H1 (cell line): ENCODE measurements at regions of chr11 and their contacts with region 1.

Region 1: DNA sequence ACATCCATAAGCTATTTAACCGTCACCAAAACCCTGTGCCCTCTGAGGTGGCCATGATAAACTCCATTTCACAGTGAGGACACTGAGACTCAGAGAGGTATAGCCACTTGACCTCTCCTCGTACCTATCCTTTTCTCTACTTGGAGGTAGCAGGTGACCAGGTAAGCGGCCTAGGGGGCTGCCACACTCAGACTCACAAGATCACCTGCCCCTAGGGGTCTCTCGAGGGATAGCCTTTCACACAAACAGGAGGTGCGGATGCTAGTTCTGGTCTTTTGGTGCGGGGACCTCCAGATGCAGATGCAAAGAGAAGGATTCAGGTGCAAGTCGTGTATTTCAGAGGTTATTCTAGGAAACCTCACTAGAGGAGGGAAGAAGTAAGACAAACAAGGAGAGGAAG is 14.6 kb downstream of the MS4A18 start:
- DNase-seq: peak in 1 of 2 experiments; percentile 57
- H3K4me3 ChIP-seq: no peak overlapping the region
- H3K27ac ChIP-seq: no peak overlapping the region
- H3K4me1 ChIP-seq: no peaks in the 10 kb centered on the region
- H3K27me3 ChIP-seq: no peaks in the 10 kb centered on the region
- CTCF ChIP-seq: peak; percentile 47 to 67 (median 51)
- EP300 ChIP-seq: no peak
- POLR2A ChIP-seq: no peak
- RAD21 ChIP-seq: peak; percentile 21 to 38; a peak in 3 of 4 replicates

Region 2: DNA sequence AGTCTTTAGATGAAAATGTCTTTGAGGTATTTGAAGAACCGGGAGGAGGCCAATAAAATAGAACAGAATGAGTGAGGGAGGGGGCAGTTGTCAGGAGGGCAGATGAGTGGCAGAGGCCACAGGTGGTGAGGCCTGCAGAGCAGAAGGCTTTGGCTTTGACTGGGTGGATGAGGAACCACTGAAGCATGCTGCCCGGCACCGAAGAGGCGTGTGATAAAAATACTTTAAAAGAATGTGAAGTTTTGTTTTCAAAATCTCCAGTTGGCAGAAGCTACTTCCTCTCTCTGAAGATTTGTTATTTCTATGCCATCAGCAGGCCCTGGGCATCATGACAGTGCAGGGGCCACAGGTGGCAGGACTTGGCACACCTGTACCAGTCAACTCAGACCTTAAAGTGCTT is 240.3 kb before region 1 on chr11:
- CTCF ChIA-PET with region 1: no interaction called
- POLR2A ChIA-PET with region 1: no interaction called
- DNase-seq: no peak
- H3K4me3 ChIP-seq: no peak overlapping the region
- H3K27ac ChIP-seq: no peak overlapping the region
- H3K4me1 ChIP-seq: peaks cover 0 to 12% (median 6%) of the 10 kb centered on the region in 4 experiments; a peak in 5 of 7 replicates
- H3K27me3 ChIP-seq: no peaks in the 10 kb centered on the region
- CTCF ChIP-seq: no peak
- EP300 ChIP-seq: no peak
- POLR2A ChIP-seq: no peak
- RAD21 ChIP-seq: no peak

Region 3: DNA sequence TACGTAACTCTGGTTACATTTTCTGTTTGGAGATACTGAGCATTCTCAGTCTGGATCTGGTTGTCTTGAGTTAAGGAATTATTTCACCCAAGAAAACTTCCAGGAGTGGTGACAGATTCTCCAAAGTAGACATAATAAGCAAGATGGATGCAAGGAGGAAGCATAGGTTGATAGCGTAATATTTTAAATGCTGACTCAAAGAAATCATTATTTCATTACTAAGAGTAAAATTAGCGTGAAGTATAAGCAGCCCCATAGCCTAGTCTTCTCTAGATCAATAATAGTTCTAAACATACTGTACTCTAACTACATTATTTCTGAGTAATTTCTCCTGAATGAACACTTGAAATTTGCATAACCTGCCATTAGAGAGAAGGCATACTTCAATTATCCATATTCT is 97.2 kb before region 1 on chr11:
- CTCF ChIA-PET with region 1: no interaction called
- POLR2A ChIA-PET with region 1: no interaction called
- DNase-seq: no peak
- H3K4me3 ChIP-seq: no peak overlapping the region
- H3K27ac ChIP-seq: no peak overlapping the region
- H3K4me1 ChIP-seq: no peaks in the 10 kb centered on the region
- H3K27me3 ChIP-seq: no peaks in the 10 kb centered on the region
- CTCF ChIP-seq: no peak
- EP300 ChIP-seq: no peak
- POLR2A ChIP-seq: no peak
- RAD21 ChIP-seq: no peak

Region 4: GRCh38 chr11:60700689-60701480 is 38.2 kb before region 1 on chr11:
- CTCF ChIA-PET with region 1: interaction called, 12 read pairs
- POLR2A ChIA-PET with region 1: no interaction called
- DNase-seq: peak in 1 of 2 experiments; percentile 67
- H3K4me3 ChIP-seq: no peak overlapping the region
- H3K27ac ChIP-seq: no peak overlapping the region
- H3K4me1 ChIP-seq: peaks cover 0 to 2% (median 0%) of the 10 kb centered on the region in 4 experiments; a peak in 3 of 7 replicates
- H3K27me3 ChIP-seq: no peaks in the 10 kb centered on the region
- CTCF ChIP-seq: peak; percentile 35 to 80 (median 70)
- EP300 ChIP-seq: no peak
- POLR2A ChIP-seq: no peak
- RAD21 ChIP-seq: peak; percentile 76 to 77

Region 5: DNA sequence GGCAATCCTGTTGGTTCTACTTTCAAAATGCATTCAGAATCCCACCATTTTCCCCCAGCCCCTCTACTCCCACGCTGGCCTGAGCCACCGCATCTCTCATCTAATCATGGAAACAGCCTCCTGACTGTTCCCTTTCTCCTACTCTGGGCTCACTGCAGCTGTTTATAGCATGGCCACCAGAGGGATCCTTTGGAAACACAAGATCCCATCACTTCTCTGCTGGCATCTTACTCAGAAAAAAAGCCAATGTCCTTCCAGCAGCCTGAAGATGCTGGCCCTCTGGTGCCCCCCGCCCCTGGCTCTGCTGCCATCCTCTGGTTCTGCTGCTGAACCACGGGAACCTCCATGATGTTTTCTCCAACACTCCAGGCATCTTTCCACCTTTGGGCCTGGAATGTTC is 28.6 kb before region 1 on chr11:
- CTCF ChIA-PET with region 1: interaction called, 18 read pairs
- POLR2A ChIA-PET with region 1: no interaction called
- DNase-seq: peak in 1 of 2 experiments; percentile 45
- H3K4me3 ChIP-seq: no peak overlapping the region
- H3K27ac ChIP-seq: no peak overlapping the region
- H3K4me1 ChIP-seq: no peaks in the 10 kb centered on the region
- H3K27me3 ChIP-seq: no peaks in the 10 kb centered on the region
- CTCF ChIP-seq: peak; percentile 7 to 69 (median 52)
- EP300 ChIP-seq: no peak
- POLR2A ChIP-seq: no peak
- RAD21 ChIP-seq: peak; percentile 30 to 39; a peak in 2 of 4 replicates

Region 6: GRCh38 chr11:60750926-60751325 is 11.8 kb after region 1 on chr11:
- CTCF ChIA-PET with region 1: interaction called, 28 read pairs
- POLR2A ChIA-PET with region 1: no interaction called
- DNase-seq: no peak
- H3K4me3 ChIP-seq: no peak overlapping the region
- H3K27ac ChIP-seq: no peak overlapping the region
- H3K4me1 ChIP-seq: no peaks in the 10 kb centered on the region
- H3K27me3 ChIP-seq: no peaks in the 10 kb centered on the region
- CTCF ChIP-seq: no peak
- EP300 ChIP-seq: no peak
- POLR2A ChIP-seq: no peak
- RAD21 ChIP-seq: no peak

Region 7: DNA sequence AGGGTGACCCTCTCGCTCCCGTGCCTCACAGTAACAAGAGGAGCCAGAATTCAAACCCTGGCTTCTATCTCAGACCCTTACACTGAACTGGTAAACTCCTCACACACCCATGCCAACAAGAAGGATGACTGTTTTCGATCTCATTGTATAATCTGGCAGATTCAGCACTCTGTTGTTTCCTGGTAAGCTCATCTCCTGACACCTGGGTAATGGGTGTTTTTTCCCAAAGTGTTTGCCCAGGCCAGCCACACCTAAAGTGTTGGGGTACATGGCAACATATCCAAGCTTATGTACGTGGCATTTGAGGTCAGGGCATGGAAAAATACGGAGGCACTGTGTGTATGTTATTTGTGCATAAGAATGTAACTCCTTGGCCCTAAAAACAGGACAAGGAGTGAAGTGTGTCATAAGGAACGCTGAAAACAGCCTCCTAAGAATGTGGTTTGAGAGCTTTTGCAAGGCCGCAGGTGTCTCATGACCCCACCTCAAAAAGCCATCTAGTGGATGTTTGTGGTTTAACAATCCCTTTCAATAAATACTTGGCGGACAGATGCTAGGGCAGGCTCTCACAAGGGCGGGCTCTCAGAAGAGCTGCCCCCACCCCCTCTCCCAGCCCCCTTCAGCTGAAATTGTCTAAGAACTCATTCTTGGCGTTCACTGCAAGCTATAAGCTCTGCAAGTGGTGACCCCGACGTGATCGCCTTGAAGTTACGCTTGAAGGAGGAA is 17.4 kb after region 1 on chr11 and contains the start of gene MS4A15:
- CTCF ChIA-PET with region 1: interaction called, 61 read pairs
- POLR2A ChIA-PET with region 1: interaction called, 3 read pairs
- DNase-seq: no peak
- H3K4me3 ChIP-seq: no peak within 1 kb of the TSS
- H3K27ac ChIP-seq: no peak within 1 kb of the TSS
- H3K4me1 ChIP-seq: no peaks in the 10 kb centered on the region; a peak in 2 of 7 replicates
- H3K27me3 ChIP-seq: no peaks in the 10 kb centered on the region
- CTCF ChIP-seq: peak; percentile 2 to 63 (median 63)
- EP300 ChIP-seq: no peak
- POLR2A ChIP-seq: no peak
- RAD21 ChIP-seq: peak; percentile 53 to 57
- total RNA-seq, gene MS4A15: 0.17 TPM in 1 of 2 replicates, not detected in the other

Region 8: GRCh38 chr11:60762851-60763691 is 24.0 kb after region 1 on chr11:
- CTCF ChIA-PET with region 1: interaction called, 61 read pairs
- POLR2A ChIA-PET with region 1: interaction called, 3 read pairs
- DNase-seq: no peak
- H3K4me3 ChIP-seq: no peak overlapping the region
- H3K27ac ChIP-seq: no peak overlapping the region
- H3K4me1 ChIP-seq: peaks cover 0 to 1% (median 0%) of the 10 kb centered on the region in 4 experiments; a peak in 1 of 7 replicates
- H3K27me3 ChIP-seq: peaks cover 0 to 6% (median 3%) of the 10 kb centered on the region in 4 experiments; a peak in 3 of 7 replicates
- CTCF ChIP-seq: peak in 2 of 3 experiments; percentile 47 to 58; a peak in 2 of 4 replicates
- EP300 ChIP-seq: no peak
- POLR2A ChIP-seq: no peak
- RAD21 ChIP-seq: peak; percentile 40 to 48

Region 9: DNA sequence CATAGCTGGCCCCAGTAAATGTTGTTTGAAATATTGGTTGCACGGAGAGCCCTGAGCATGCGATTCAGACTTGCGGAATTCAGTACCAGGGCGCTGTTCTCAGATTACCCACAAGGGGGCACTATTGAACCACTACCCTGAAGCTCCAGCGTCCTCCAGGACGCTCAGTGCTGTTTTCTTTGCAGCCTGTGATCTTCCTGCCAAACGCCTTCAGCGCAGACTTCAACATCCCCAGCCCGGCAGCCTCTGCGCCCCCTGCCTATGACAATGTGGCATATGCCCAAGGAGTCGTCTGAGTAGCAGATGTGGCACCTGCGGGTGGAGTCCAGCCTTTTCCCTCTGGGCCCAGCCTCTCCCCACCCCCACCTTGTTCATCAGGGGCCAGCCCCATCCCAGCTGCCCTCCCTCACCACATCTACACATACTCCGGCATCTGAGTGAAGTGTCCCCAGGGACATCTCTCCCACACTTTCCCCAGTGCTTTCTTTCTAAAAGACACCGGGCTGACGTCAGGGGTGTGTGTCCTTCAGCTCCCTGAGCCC is 36.4 kb after region 1 on chr11:
- CTCF ChIA-PET with region 1: interaction called, 10 read pairs
- POLR2A ChIA-PET with region 1: no interaction called
- DNase-seq: peak; percentile 90 to 94
- H3K4me3 ChIP-seq: no peak overlapping the region
- H3K27ac ChIP-seq: no peak overlapping the region
- H3K4me1 ChIP-seq: no peaks in the 10 kb centered on the region; a peak in 1 of 7 replicates
- H3K27me3 ChIP-seq: no peaks in the 10 kb centered on the region
- CTCF ChIP-seq: peak; percentile 65 to 96 (median 93)
- EP300 ChIP-seq: no peak
- POLR2A ChIP-seq: no peak
- RAD21 ChIP-seq: peak; percentile 81 to 86